Ovary (tissue), 10 donors: ENCODE measurements at regions of chr22 and their contacts with region 1.

Region 1: DNA sequence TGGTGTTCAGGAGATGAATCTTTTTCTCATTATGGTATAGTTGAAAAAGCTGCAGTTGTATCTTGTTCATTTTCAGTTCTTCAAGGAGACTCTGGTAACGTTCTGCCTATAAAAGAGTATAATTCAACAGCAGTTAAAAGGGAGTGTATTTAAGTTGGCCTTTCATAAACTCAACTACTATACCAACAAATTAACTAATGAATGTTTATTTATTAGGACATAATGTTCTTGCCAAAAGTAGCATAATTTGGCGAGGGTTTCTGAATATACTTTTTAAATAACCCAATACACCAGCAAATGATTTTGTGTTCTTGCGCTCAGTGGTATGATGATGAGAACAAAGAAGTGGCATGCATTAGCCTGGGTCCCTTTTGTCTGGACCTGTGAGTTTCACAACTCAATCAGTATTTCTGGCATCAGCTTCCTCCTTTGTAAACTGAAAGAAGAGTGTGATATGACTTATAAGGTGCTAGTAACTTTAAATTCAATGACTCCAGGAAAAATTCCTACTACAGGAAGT is 10.9 kb downstream of the SMC1B start:
- DNase-seq: no peak
- H3K4me3 ChIP-seq: no peak overlapping the region
- H3K27ac ChIP-seq: no peak overlapping the region
- H3K4me1 ChIP-seq: no peaks in the 10 kb centered on the region
- H3K27me3 ChIP-seq: no peaks in the 10 kb centered on the region
- CTCF ChIP-seq: no peak
- EP300 ChIP-seq: no peak
- POLR2A ChIP-seq: no peak

Region 2: DNA sequence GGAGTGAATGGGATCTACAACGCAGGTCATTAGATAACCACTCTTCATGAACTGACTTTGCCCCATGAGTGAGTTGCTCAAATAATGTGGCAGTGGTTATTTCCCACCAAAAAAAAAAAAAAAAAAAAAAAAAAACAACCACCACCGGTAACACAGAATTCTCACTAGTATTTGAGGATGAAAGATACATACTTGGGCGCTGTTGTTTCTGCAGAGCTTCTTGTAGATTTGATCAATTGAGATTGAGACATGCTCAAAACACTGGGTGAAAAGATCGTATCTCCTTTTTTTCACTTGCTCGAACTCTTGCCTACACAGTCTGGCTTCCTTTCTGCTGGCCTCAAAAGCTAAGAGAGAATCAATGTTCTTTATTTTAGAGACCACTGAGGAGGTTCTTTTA is 48.7 kb before region 1 on chr22:
- intact Hi-C with region 1: loop called in 1 of 4 experiments (anchors 2 kb)
- DNase-seq: no peak
- H3K4me3 ChIP-seq: no peak overlapping the region
- H3K27ac ChIP-seq: no peak overlapping the region
- H3K4me1 ChIP-seq: no peaks in the 10 kb centered on the region
- H3K27me3 ChIP-seq: no peaks in the 10 kb centered on the region
- CTCF ChIP-seq: no peak
- EP300 ChIP-seq: no peak
- POLR2A ChIP-seq: no peak

Region 3: GRCh38 chr22:45994491-45995404 is 592.2 kb after region 1 on chr22:
- intact Hi-C with region 1: no loop called
- DNase-seq: peak; percentile 75 to 91 (median 89)
- H3K4me3 ChIP-seq: no peak overlapping the region
- H3K27ac ChIP-seq: no peak overlapping the region
- H3K4me1 ChIP-seq: peaks cover 17% of the 10 kb centered on the region
- H3K27me3 ChIP-seq: no peaks in the 10 kb centered on the region
- CTCF ChIP-seq: peak; percentile 93 to 97 (median 97)
- EP300 ChIP-seq: no peak
- POLR2A ChIP-seq: no peak